ENCODE measurements at regions of chr14 and their contacts with region 1.

Region 1: GRCh38 chr14:70907176-70907995 is at the start of gene PCNX1:
- DNase-seq: peak; percentile 86 to 98 (median 92)
- ATAC-seq: peak; percentile 93
- H3K4me3 ChIP-seq: peak within 1 kb of the TSS; percentile 87 to 100
- H3K27ac ChIP-seq: peak within 1 kb of the TSS; percentile 95 to 96
- H3K4me1 ChIP-seq: peaks cover 5 to 59% of the 10 kb centered on the region in 2 donors
- H3K27me3 ChIP-seq: no peaks in the 10 kb centered on the region
- CTCF ChIP-seq: peak; percentile 81 to 89
- polyA plus RNA-seq, gene PCNX1: 36.9 to 49.7 (median 49.6) TPM

Region 2: GRCh38 chr14:70289138-70289537 is 618.2 kb before region 1 on chr14:
- intact Hi-C with region 1: no loop called
- DNase-seq: no peak
- ATAC-seq: no peak
- H3K4me3 ChIP-seq: no peak overlapping the region
- H3K27ac ChIP-seq: no peak overlapping the region
- H3K4me1 ChIP-seq: no peaks in the 10 kb centered on the region
- H3K27me3 ChIP-seq: peaks cover 0 to 19% of the 10 kb centered on the region in 2 donors
- CTCF ChIP-seq: no peak

Region 3: GRCh38 chr14:70832536-70833305 is 74.7 kb before region 1 on chr14:
- intact Hi-C with region 1: loop called in 1 of 2 experiments (anchors 10 kb)
- DNase-seq: no peak
- ATAC-seq: peak; percentile 43
- H3K4me3 ChIP-seq: no peak overlapping the region
- H3K27ac ChIP-seq: no peak overlapping the region
- H3K4me1 ChIP-seq: no peaks in the 10 kb centered on the region
- H3K27me3 ChIP-seq: no peaks in the 10 kb centered on the region
- CTCF ChIP-seq: no peak